WTC11 (cell line): ENCODE measurements at regions of chr1 and their contacts with region 1.

Region 1: GRCh38 chr1:151281969-151282882 is at the start of gene ZNF687:
- DNase-seq: peak; percentile 99
- ATAC-seq: peak; percentile 95
- H3K4me3 Mint-ChIP-seq: peak within 1 kb of the TSS; percentile 96
- H3K27ac Mint-ChIP-seq: peak within 1 kb of the TSS; percentile 100
- H3K4me1 Mint-ChIP-seq: peaks cover 15% of the 10 kb centered on the region
- H3K27me3 Mint-ChIP-seq: peaks cover 4% of the 10 kb centered on the region; the same call in 1 of the 2 replicates
- CTCF ChIP-seq: no peak
- total RNA-seq, gene ZNF687: 54.1 to 56.8 TPM (median 55.1 TPM) in 3 replicates

Region 2: DNA sequence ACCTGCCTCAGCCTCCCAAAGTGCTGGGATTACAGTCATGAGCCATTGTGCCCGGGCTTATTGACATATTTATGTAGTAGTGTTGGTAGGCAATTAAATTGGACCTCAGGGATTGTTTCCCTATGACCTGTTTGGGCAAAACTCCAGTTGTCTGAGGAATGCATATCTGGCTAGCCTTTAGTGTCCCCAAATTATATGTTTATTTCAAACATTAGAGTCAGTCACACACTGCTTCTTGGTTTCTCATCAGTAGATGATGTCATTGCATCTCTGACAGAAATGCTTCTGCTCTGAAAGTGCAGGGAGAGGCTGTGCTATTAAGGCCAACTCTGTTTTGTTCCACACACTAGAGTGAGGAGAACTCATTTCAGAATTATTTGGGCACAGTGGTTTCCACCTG is 71.4 kb before region 1 on chr1:
- CTCF ChIA-PET with region 1: no interaction called
- POLR2A ChIA-PET with region 1: no interaction called
- DNase-seq: no peak
- ATAC-seq: no peak
- H3K4me3 Mint-ChIP-seq: no peak overlapping the region
- H3K27ac Mint-ChIP-seq: no peak overlapping the region
- H3K4me1 Mint-ChIP-seq: no peaks in the 10 kb centered on the region
- H3K27me3 Mint-ChIP-seq: no peaks in the 10 kb centered on the region
- CTCF ChIP-seq: no peak

Region 3: GRCh38 chr1:151251656-151252470 is 30.4 kb before region 1 on chr1:
- CTCF ChIA-PET with region 1: interaction called, 13 read pairs
- POLR2A ChIA-PET with region 1: interaction called, 9 read pairs
- DNase-seq: peak; percentile 54
- ATAC-seq: peak; percentile 46
- H3K4me3 Mint-ChIP-seq: no peak overlapping the region
- H3K27ac Mint-ChIP-seq: 0 out of 2 replicates have a peak overlapping the region, but pooled peaks have one; percentile 63
- H3K4me1 Mint-ChIP-seq: peaks cover 9% of the 10 kb centered on the region
- H3K27me3 Mint-ChIP-seq: no peaks in the 10 kb centered on the region; the same call in 1 of the 2 replicates
- CTCF ChIP-seq: peak; percentile 58

Region 4: DNA sequence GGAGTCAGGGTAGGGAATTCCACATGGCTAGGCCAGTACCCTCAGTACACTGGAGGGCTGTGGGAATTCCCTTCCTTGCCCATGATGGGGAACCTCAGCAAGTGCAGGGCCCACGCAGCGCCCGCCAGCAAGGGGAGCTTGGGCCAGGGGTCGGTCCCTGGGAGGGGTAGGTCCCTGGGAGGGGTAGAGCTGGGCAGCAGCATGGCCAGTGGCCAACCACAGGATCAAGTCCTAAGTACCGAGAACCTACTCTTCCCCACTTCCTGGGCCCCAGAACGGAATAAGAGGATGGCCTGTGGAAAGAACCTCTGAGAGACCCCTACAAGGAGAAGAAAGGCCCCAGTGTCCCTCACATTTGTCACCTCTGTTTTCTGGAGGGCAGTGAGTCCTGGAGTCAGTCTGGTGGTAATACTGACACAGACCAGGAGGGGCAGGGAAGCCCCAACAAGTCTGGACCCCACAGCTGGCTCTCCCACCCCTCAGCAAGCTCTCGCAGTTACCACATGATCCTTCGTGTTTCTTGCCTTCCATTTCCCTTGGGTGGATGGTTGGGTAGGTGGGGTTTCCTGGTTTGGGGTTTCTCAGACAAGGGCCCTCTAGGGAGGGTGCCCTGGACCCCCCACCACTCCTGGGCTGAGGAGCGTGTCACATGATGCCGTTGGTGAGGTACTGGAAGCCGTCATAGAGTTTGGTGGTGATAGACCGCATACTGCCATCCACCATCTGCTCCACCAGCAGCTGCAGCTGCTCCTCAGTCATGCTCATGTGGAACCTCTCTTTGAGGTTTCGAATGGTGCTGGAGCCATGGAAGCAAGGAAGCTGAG is 10.2 kb after region 1 on chr1:
- CTCF ChIA-PET with region 1: interaction called, 9 read pairs
- POLR2A ChIA-PET with region 1: interaction called, 16 read pairs
- DNase-seq: no peak
- ATAC-seq: peak; percentile 43
- H3K4me3 Mint-ChIP-seq: no peak overlapping the region
- H3K27ac Mint-ChIP-seq: no peak overlapping the region; the same call in 1 of the 2 replicates
- H3K4me1 Mint-ChIP-seq: peaks cover 30% of the 10 kb centered on the region
- H3K27me3 Mint-ChIP-seq: no peaks in the 10 kb centered on the region
- CTCF ChIP-seq: no peak

Region 5: GRCh38 chr1:151327223-151327902 is 45.1 kb after region 1 on chr1 and contains the start of gene PI4KB:
- CTCF ChIA-PET with region 1: interaction called, 5 read pairs
- POLR2A ChIA-PET with region 1: interaction called, 23 read pairs
- DNase-seq: peak; percentile 92
- ATAC-seq: peak; percentile 96
- H3K4me3 Mint-ChIP-seq: peak within 1 kb of the TSS; percentile 87
- H3K27ac Mint-ChIP-seq: peak within 1 kb of the TSS; percentile 98
- H3K4me1 Mint-ChIP-seq: peaks cover 13% of the 10 kb centered on the region
- H3K27me3 Mint-ChIP-seq: no peaks in the 10 kb centered on the region
- CTCF ChIP-seq: no peak
- total RNA-seq, gene PI4KB: 25.6 to 33.6 TPM (median 30.5 TPM) in 3 replicates

Region 6: DNA sequence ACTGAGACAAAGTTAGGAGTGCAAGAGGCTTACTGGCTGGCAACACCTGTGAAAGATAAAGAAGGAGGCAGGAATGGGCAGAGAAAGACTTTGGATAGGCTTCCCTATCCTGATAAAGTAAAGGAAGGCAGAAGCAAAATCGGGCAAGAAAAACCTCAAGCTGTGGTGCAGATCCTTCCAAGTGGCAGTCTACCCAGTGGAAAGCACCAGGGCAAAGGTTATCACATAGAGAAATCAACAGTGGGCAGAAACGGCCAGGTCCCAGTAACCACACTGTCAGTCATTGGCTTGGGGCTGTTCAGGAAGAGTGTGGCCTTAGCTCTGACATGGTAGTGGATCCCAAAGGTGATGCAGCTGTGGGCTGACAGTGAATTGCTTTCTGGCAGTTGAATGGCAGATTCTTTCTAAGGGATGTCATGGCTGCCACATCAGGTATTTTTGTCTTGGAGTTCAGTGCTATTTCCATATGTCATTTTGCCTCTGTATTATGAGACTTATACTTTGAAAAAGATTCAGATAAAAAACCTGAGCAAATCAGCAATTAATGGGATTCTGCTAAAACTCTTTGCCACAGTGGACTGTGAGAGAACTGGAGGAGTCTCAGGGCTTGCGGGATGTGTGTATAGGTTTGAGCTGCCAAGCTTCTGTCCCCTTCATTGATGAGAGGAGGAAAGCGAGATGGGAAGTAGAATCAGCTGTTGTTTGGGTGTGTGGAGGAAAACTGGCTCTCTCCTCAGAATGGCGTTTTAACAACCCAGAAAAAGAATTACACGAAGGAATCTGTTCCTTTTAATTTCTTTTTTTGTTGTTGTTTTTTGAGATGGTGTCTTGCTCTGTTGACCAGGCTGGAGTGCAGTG is 220.9 kb after region 1 on chr1:
- CTCF ChIA-PET with region 1: no interaction called
- POLR2A ChIA-PET with region 1: no interaction called
- DNase-seq: no peak
- ATAC-seq: no peak
- H3K4me3 Mint-ChIP-seq: no peak overlapping the region
- H3K27ac Mint-ChIP-seq: peak overlapping the region; percentile 69
- H3K4me1 Mint-ChIP-seq: no peaks in the 10 kb centered on the region
- H3K27me3 Mint-ChIP-seq: no peaks in the 10 kb centered on the region
- CTCF ChIP-seq: no peak

Region 7: DNA sequence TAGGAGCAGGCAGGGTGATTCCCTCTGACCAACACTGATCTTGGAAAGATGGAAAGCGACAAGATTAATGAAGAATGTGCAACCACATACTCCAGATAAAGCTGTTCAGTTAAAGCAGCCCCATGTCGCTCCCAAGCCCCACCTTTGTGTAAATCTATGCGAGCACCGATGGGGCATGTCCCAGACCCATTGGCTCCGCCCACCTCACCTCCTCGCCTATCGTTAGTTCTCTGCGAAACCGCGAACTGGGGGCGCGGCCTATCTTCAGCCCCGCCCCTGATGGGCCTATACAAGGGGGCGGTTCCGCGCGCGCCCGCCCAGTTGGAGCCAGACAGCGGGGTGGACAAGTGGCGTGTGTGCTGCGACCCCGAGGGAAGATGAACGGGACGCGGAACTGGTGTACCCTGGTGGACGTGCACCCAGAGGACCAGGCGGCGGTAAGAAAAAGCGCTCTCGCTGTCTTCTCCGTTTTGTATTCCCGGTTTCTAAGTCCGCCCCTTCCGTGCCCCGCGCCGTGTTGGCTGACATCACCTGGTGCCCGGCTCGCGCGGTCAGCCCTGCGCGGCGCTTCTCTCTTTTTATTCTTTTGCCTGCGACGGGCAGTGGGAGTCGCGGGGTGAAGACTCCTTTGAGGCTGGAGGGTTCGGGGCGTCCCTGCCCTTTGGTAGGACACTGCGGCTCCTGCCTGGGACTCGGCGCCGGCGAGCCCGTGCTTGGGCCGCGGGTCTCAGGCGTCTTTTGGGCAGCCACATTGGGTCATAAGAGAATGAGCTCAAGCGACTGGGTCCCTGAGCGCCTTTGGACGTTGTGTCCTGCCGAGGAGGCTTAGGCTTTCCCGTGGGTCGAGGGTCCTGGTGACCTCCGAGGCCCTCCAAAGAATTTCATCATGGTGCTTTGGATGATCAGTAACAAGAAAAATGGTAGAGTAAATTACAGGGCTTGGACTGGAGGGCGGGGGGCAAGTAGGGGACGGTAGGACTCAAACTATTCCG is 258.1 kb after region 1 on chr1 and contains the start of gene TUFT1:
- CTCF ChIA-PET with region 1: no interaction called
- POLR2A ChIA-PET with region 1: no interaction called
- DNase-seq: peak; percentile 99
- ATAC-seq: peak; percentile 93
- H3K4me3 Mint-ChIP-seq: peak within 1 kb of the TSS; percentile 96
- H3K27ac Mint-ChIP-seq: peak within 1 kb of the TSS; percentile 99
- H3K4me1 Mint-ChIP-seq: peaks cover 16% of the 10 kb centered on the region
- H3K27me3 Mint-ChIP-seq: peaks cover 3% of the 10 kb centered on the region; the same call in 1 of the 2 replicates
- CTCF ChIP-seq: no peak
- total RNA-seq, gene TUFT1: 7.7 to 8.6 TPM (median 7.9 TPM) in 3 replicates

Region 8: GRCh38 chr1:151739590-151740375 is 457.6 kb after region 1 on chr1:
- CTCF ChIA-PET with region 1: no interaction called
- POLR2A ChIA-PET with region 1: no interaction called
- DNase-seq: no peak
- ATAC-seq: no peak
- H3K4me3 Mint-ChIP-seq: no peak overlapping the region
- H3K27ac Mint-ChIP-seq: no peak overlapping the region
- H3K4me1 Mint-ChIP-seq: peaks cover 9% of the 10 kb centered on the region
- H3K27me3 Mint-ChIP-seq: peaks cover 5% of the 10 kb centered on the region
- CTCF ChIP-seq: no peak